Dorsolateral prefrontal cortex (tissue), 120 donors: ENCODE measurements at regions of chrX and their contacts with region 1.

Region 1: DNA sequence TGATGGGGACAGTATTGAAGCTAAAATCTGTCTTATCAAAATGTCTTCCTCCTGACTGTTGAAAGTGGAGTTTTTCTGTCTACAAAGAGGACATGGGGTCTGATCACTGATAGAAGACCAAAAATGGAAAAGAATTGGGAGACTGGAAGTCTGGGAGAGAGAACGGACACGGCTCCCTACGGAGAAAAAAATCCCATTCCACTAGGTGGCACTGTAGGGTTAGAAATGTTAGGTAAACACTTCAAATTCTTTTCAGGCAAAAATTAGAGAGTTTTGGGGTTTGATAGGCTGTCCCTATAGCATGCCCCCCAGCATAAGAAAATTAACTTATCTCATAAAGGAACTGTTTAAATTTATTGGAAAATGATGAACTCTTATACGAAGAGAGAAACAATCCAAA is 200.5 kb downstream of the FAM133A start:
- DNase-seq: no peak
- H3K4me3 ChIP-seq: no peak overlapping the region
- H3K27ac ChIP-seq: no peak overlapping the region
- H3K27me3 ChIP-seq: peaks cover 0 to 65% (median 15%) of the 10 kb centered on the region in 45 donors
- CTCF ChIP-seq: peak in 55 of 56 donors; percentile 36 to 79 (median 60)

Region 2: GRCh38 chrX:94011635-94012034 is 137.1 kb after region 1 on chrX:
- intact Hi-C with region 1: no loop called
- DNase-seq: no peak
- H3K4me3 ChIP-seq: no peak overlapping the region
- H3K27ac ChIP-seq: no peak overlapping the region
- H3K27me3 ChIP-seq: peaks cover 0 to 59% (median 12%) of the 10 kb centered on the region in 45 donors
- CTCF ChIP-seq: no peak

Region 3: GRCh38 chrX:94058728-94059382 is 184.3 kb after region 1 on chrX:
- intact Hi-C with region 1: loop called (anchors 10 kb)
- DNase-seq: peak in 1 of 10 donors; percentile 17
- H3K4me3 ChIP-seq: peak overlapping the region in 31 of 59 donors; percentile 1 to 48 (median 28)
- H3K27ac ChIP-seq: no peak overlapping the region
- H3K27me3 ChIP-seq: peaks cover 0 to 86% (median 16%) of the 10 kb centered on the region in 45 donors
- CTCF ChIP-seq: peak in 53 of 56 donors; percentile 15 to 74 (median 56)

Region 4: DNA sequence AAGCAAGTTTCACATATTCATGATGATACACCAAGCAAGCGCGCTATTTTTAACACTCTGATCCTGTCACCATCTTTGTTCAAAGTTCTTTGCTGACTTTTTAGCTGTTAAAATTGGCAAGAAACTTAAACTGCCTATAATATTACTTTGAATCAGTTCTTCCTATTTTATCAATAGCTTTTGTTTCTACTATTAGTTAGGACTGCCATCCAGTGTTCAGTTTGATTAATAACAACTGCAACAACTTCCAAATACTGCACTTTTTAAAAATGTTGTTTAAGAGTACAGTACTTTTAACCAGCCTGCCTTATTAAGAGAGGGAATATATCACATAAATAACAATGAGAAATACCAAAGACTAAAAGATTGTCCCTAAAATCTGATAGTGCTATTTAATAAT is 413.8 kb after region 1 on chrX:
- intact Hi-C with region 1: loop called in 1 of 2 experiments (anchors 10 kb)
- DNase-seq: no peak
- H3K4me3 ChIP-seq: no peak overlapping the region
- H3K27ac ChIP-seq: no peak overlapping the region
- H3K27me3 ChIP-seq: peaks cover 0 to 68% (median 20%) of the 10 kb centered on the region in 45 donors
- CTCF ChIP-seq: peak in 10 of 56 donors; percentile 7 to 43 (median 20)